Naive thymus-derived CD4-positive, alpha-beta T cell (primary cell): ENCODE measurements at regions of chr4 and their contacts with region 1.

Region 1: GRCh38 chr4:160110891-160111290 is 1008.0 kb downstream of the RAPGEF2 start:
- DNase-seq: no peak
- ATAC-seq: no peak
- H3K4me3 ChIP-seq: no peak overlapping the region
- H3K4me3 Mint-ChIP-seq: no peak overlapping the region
- H3K27ac ChIP-seq: no peak overlapping the region
- H3K27ac Mint-ChIP-seq: no peak overlapping the region
- H3K4me1 ChIP-seq: no peaks in the 10 kb centered on the region
- H3K4me1 Mint-ChIP-seq: no peaks in the 10 kb centered on the region
- H3K27me3 ChIP-seq: no peaks in the 10 kb centered on the region
- H3K27me3 Mint-ChIP-seq: no peaks in the 10 kb centered on the region

Region 2: GRCh38 chr4:160020804-160021203 is 90.1 kb before region 1 on chr4:
- CTCF ChIA-PET with region 1: no interaction called
- POLR2A ChIA-PET with region 1: no interaction called
- intact Hi-C with region 1: no loop called
- DNase-seq: no peak
- ATAC-seq: no peak
- H3K4me3 ChIP-seq: no peak overlapping the region
- H3K4me3 Mint-ChIP-seq: no peak overlapping the region
- H3K27ac ChIP-seq: no peak overlapping the region
- H3K27ac Mint-ChIP-seq: no peak overlapping the region
- H3K4me1 ChIP-seq: no peaks in the 10 kb centered on the region
- H3K4me1 Mint-ChIP-seq: no peaks in the 10 kb centered on the region
- H3K27me3 ChIP-seq: no peaks in the 10 kb centered on the region
- H3K27me3 Mint-ChIP-seq: no peaks in the 10 kb centered on the region

Region 3: DNA sequence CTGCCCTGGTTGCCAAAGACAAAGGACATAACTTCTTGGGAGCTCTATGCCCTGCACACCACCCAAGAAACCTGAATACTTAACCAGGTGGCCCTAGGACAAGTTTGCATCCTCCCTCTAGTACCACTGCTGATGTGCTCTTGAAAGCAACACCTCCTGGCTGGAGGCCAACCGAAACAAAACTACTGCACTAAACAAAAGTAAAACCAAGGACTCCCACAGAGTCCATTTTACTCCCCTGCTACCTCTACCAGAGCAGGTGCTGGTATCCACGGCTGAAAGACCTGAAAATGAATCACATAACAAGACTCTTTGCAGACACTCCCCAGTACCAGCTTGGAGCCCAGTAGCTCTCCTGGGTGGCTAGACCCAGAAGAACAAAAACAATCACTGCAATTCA is 66.2 kb before region 1 on chr4:
- CTCF ChIA-PET with region 1: no interaction called
- POLR2A ChIA-PET with region 1: no interaction called
- intact Hi-C with region 1: loop called in 1 of 2 experiments (anchors 10 kb)
- DNase-seq: no peak
- ATAC-seq: no peak
- H3K4me3 ChIP-seq: no peak overlapping the region
- H3K4me3 Mint-ChIP-seq: no peak overlapping the region
- H3K27ac ChIP-seq: no peak overlapping the region
- H3K27ac Mint-ChIP-seq: no peak overlapping the region
- H3K4me1 ChIP-seq: no peaks in the 10 kb centered on the region
- H3K4me1 Mint-ChIP-seq: no peaks in the 10 kb centered on the region
- H3K27me3 ChIP-seq: no peaks in the 10 kb centered on the region
- H3K27me3 Mint-ChIP-seq: no peaks in the 10 kb centered on the region